Psoas muscle (tissue), 8 donors: ENCODE measurements at regions of chr3 and their contacts with region 1.

Region 1: GRCh38 chr3:115814778-115815380 is 191.6 kb downstream of the GAP43 start:
- DNase-seq: peak; percentile 59 to 74
- ATAC-seq: peak; percentile 67 to 89 (median 78)
- H3K4me3 ChIP-seq: no peak overlapping the region
- H3K27ac ChIP-seq: no peak overlapping the region
- H3K4me1 ChIP-seq: no peaks in the 10 kb centered on the region
- H3K27me3 ChIP-seq: no peaks in the 10 kb centered on the region
- CTCF ChIP-seq: peak; percentile 93

Region 2: GRCh38 chr3:115692887-115693524 is 121.9 kb before region 1 on chr3:
- intact Hi-C with region 1: loop called in 1 of 2 experiments (anchors 2 kb)
- DNase-seq: peak; percentile 54 to 66
- ATAC-seq: peak; percentile 90 to 99 (median 94)
- H3K4me3 ChIP-seq: no peak overlapping the region
- H3K27ac ChIP-seq: no peak overlapping the region
- H3K4me1 ChIP-seq: no peaks in the 10 kb centered on the region
- H3K27me3 ChIP-seq: no peaks in the 10 kb centered on the region
- CTCF ChIP-seq: peak; percentile 81